CD8-positive, alpha-beta T cell (primary cell): ENCODE measurements at regions of chr20 and their contacts with region 1.

Region 1: GRCh38 chr20:40990542-40991120 is 38.0 kb upstream of the TOP1 start:
- DNase-seq: peak; percentile 35 to 77 (median 65)
- ATAC-seq: peak; percentile 81
- H3K4me3 ChIP-seq: no peak overlapping the region
- H3K4me3 Mint-ChIP-seq: no peak overlapping the region
- H3K27ac ChIP-seq: no peak overlapping the region
- H3K27ac Mint-ChIP-seq: no peak overlapping the region
- H3K4me1 ChIP-seq: peaks cover 30% of the 10 kb centered on the region
- H3K4me1 Mint-ChIP-seq: peaks cover 36% of the 10 kb centered on the region
- H3K27me3 ChIP-seq: no peaks in the 10 kb centered on the region
- H3K27me3 Mint-ChIP-seq: no peaks in the 10 kb centered on the region
- CTCF ChIP-seq: peak; percentile 74

Region 2: GRCh38 chr20:40806929-40807820 is 183.5 kb before region 1 on chr20:
- CTCF ChIA-PET with region 1: no interaction called
- POLR2A ChIA-PET with region 1: no interaction called
- intact Hi-C with region 1: no loop called
- DNase-seq: no peak
- ATAC-seq: no peak
- H3K4me3 ChIP-seq: no peak overlapping the region
- H3K4me3 Mint-ChIP-seq: no peak overlapping the region
- H3K27ac ChIP-seq: no peak overlapping the region
- H3K27ac Mint-ChIP-seq: no peak overlapping the region
- H3K4me1 ChIP-seq: no peaks in the 10 kb centered on the region
- H3K4me1 Mint-ChIP-seq: no peaks in the 10 kb centered on the region
- H3K27me3 ChIP-seq: no peaks in the 10 kb centered on the region
- H3K27me3 Mint-ChIP-seq: peaks cover 6% of the 10 kb centered on the region
- CTCF ChIP-seq: no peak

Region 3: GRCh38 chr20:40962730-40963504 is 27.7 kb before region 1 on chr20:
- CTCF ChIA-PET with region 1: interaction called, 21 read pairs
- POLR2A ChIA-PET with region 1: no interaction called
- intact Hi-C with region 1: loop called in 1 of 2 experiments (anchors 1 kb)
- DNase-seq: peak; percentile 48 to 86 (median 74)
- ATAC-seq: peak; percentile 86
- H3K4me3 ChIP-seq: no peak overlapping the region
- H3K4me3 Mint-ChIP-seq: no peak overlapping the region
- H3K27ac ChIP-seq: no peak overlapping the region
- H3K27ac Mint-ChIP-seq: no peak overlapping the region
- H3K4me1 ChIP-seq: peaks cover 16% of the 10 kb centered on the region
- H3K4me1 Mint-ChIP-seq: peaks cover 8% of the 10 kb centered on the region
- H3K27me3 ChIP-seq: no peaks in the 10 kb centered on the region
- H3K27me3 Mint-ChIP-seq: no peaks in the 10 kb centered on the region
- CTCF ChIP-seq: peak; percentile 88

Region 4: DNA sequence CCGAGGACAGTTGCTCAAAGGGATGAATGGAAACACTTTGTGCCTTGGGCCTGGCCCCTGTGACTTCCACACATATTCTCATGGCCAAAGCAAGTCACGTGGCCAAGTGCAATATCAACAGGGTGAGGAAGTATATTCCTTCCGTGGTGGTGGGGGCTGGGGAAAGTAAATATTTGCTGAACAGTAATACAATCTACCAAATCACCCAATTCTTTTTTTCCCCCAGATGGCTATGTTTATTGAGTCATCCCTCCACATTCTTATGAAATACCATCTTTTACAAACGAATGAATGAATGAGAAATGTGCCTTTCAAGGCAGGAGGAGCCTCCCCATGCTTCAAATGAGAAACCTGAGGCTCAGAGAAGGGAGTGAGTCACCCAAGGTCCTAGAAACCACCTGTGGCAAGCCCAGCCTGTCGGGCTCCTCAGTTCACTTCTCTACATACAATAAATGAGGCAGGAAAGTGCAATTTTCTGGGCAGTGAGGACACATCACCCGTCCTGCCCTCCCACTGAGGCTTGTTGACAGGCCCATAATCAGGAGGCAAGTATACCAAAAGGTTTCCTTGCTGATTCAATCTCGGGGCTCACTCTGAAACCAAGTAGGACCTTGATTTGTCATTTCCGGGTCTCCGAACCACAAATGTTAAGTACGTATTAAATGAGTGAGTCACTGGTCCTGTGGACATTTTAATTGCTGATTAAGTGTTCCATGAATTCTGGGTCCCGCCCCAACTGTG is 12.7 kb after region 1 on chr20:
- CTCF ChIA-PET with region 1: interaction called, 15 read pairs
- POLR2A ChIA-PET with region 1: interaction called, 3 read pairs
- intact Hi-C with region 1: no loop called
- DNase-seq: peak; percentile 24 to 86 (median 60)
- ATAC-seq: peak; percentile 89
- H3K4me3 ChIP-seq: peak overlapping the region; percentile 26 to 40
- H3K4me3 Mint-ChIP-seq: peak overlapping the region; percentile 76
- H3K27ac ChIP-seq: peak overlapping the region; percentile 58 to 86
- H3K27ac Mint-ChIP-seq: peak overlapping the region; percentile 92
- H3K4me1 ChIP-seq: peaks cover 14% of the 10 kb centered on the region
- H3K4me1 Mint-ChIP-seq: peaks cover 21% of the 10 kb centered on the region
- H3K27me3 ChIP-seq: no peaks in the 10 kb centered on the region
- H3K27me3 Mint-ChIP-seq: no peaks in the 10 kb centered on the region
- CTCF ChIP-seq: no peak

Region 5: GRCh38 chr20:41028348-41029148 is 37.9 kb after region 1 on chr20 and contains the start of gene TOP1:
- CTCF ChIA-PET with region 1: interaction called, 9 read pairs
- POLR2A ChIA-PET with region 1: interaction called, 12 read pairs
- intact Hi-C with region 1: loop called (anchors 1 to 5 kb)
- DNase-seq: peak; percentile 99 to 100 (median 100)
- ATAC-seq: peak; percentile 97
- H3K4me3 ChIP-seq: peak within 1 kb of the TSS; percentile 72 to 76
- H3K4me3 Mint-ChIP-seq: peak within 1 kb of the TSS; percentile 92
- H3K27ac ChIP-seq: peak within 1 kb of the TSS; percentile 94 to 95
- H3K27ac Mint-ChIP-seq: peak within 1 kb of the TSS; percentile 99
- H3K4me1 ChIP-seq: peaks cover 45% of the 10 kb centered on the region
- H3K4me1 Mint-ChIP-seq: peaks cover 46% of the 10 kb centered on the region
- H3K27me3 ChIP-seq: no peaks in the 10 kb centered on the region
- H3K27me3 Mint-ChIP-seq: no peaks in the 10 kb centered on the region
- CTCF ChIP-seq: no peak
- total RNA-seq, gene TOP1: 58.5 to 61.1 TPM

Region 6: DNA sequence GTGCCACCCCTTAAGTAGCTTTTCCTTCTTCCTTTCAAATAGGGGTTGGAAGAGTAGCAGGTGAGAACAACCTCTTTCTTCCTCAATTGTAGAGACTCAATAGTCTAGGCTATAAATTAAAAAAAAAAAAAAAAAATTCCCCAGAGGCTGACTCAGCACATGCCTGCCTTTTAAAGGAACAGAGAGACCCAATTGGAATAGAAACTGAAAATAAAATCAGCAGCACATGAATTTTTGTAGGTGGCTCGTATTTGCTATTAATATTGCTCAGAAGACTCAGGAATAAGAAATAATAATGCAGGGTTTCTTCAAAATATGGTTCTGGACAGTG is 57.3 kb after region 1 on chr20:
- CTCF ChIA-PET with region 1: interaction called, 19 read pairs
- POLR2A ChIA-PET with region 1: interaction called, 5 read pairs
- intact Hi-C with region 1: loop called in 1 of 2 experiments (anchors 5 kb)
- DNase-seq: peak in 2 of 9 experiments; percentile 48 to 69
- ATAC-seq: peak; percentile 63
- H3K4me3 ChIP-seq: peak overlapping the region; percentile 34 to 41
- H3K4me3 Mint-ChIP-seq: peak overlapping the region; percentile 79
- H3K27ac ChIP-seq: peak overlapping the region; percentile 9 to 68
- H3K27ac Mint-ChIP-seq: peak overlapping the region; percentile 81
- H3K4me1 ChIP-seq: peaks cover 77% of the 10 kb centered on the region
- H3K4me1 Mint-ChIP-seq: peaks cover 91% of the 10 kb centered on the region
- H3K27me3 ChIP-seq: no peaks in the 10 kb centered on the region
- H3K27me3 Mint-ChIP-seq: no peaks in the 10 kb centered on the region
- CTCF ChIP-seq: no peak

Region 7: DNA sequence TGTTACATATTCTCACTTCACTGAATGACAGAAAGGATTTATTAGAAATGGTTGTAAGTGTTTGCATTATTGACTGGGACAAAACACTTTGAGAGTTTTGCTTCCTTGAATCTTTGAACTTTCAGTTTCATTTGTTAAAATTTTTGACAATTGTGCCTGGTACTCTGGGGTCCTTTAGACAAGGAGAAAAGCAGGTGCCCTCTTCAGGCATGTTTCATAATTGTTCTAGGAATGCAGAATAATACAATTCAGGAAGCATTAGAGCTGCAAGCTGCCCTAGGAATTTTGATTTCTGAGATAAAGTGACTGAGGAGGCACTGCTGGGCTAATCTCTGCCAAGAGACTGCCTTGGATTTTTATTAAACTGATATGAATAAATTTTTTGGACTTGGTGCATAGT is 87.7 kb after region 1 on chr20:
- CTCF ChIA-PET with region 1: interaction called, 22 read pairs
- POLR2A ChIA-PET with region 1: no interaction called
- intact Hi-C with region 1: loop called (anchors 5 kb)
- DNase-seq: peak in 2 of 9 experiments; percentile 30 to 52
- ATAC-seq: peak; percentile 46
- H3K4me3 ChIP-seq: no peak overlapping the region
- H3K4me3 Mint-ChIP-seq: peak overlapping the region; percentile 43
- H3K27ac ChIP-seq: no peak overlapping the region
- H3K27ac Mint-ChIP-seq: peak overlapping the region; percentile 71
- H3K4me1 ChIP-seq: peaks cover 28% of the 10 kb centered on the region
- H3K4me1 Mint-ChIP-seq: peaks cover 65% of the 10 kb centered on the region
- H3K27me3 ChIP-seq: no peaks in the 10 kb centered on the region
- H3K27me3 Mint-ChIP-seq: no peaks in the 10 kb centered on the region
- CTCF ChIP-seq: no peak

Region 8: DNA sequence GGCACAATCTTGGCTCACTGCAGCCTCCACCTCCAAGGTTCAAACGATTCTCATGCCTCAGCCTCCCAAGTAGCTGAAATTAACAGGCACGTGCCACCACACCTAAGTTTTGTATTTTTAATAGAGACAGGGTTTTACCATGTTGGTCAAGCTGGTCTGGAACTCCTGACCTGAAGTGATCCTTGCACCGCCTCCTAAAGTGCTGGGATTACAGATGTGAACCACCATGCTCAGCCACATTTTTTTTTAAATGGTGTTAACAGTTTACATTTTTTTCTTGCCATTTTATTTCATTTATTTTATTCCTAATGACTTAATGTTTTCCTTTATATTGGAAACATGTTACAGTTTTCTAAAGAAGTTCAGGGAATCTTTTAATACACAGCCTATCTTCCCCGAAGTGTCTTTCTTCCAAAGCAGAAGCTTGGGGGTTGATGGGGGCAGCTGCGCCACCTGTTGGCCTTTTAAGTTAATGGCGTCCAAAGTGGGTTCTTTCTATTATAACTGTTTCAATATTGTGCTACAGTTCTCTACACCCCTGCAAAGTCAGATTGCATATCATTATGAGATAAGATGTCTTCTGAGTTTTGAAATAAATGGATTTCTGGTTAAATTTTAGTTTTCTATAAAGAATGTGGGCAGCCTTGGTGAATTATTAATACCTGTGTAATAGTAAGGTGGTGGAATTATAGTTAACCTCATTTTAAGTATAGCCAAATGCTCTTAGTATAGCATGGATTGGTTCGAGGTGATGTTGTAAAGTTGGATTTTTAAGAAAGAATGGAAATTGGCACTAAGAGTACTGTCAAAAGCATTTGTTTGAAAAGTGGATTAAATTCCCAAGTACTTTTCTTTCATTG is 104.7 kb after region 1 on chr20:
- CTCF ChIA-PET with region 1: interaction called, 183 read pairs
- POLR2A ChIA-PET with region 1: interaction called, 5 read pairs
- intact Hi-C with region 1: loop called (anchors 1 kb)
- DNase-seq: peak; percentile 13 to 78 (median 59)
- ATAC-seq: peak; percentile 84
- H3K4me3 ChIP-seq: no peak overlapping the region
- H3K4me3 Mint-ChIP-seq: no peak overlapping the region
- H3K27ac ChIP-seq: no peak overlapping the region
- H3K27ac Mint-ChIP-seq: no peak overlapping the region
- H3K4me1 ChIP-seq: peaks cover 2% of the 10 kb centered on the region
- H3K4me1 Mint-ChIP-seq: peaks cover 3% of the 10 kb centered on the region
- H3K27me3 ChIP-seq: no peaks in the 10 kb centered on the region
- H3K27me3 Mint-ChIP-seq: no peaks in the 10 kb centered on the region
- CTCF ChIP-seq: peak; percentile 85